Activated CD4-positive, alpha-beta memory T cell treated with anti-CD3 and anti-CD28 coated beads for 36 hours (primary cell): ENCODE measurements at regions of chr14 and their contacts with region 1.

Region 1: GRCh38 chr14:36941783-36942521 is 230.5 kb downstream of the SLC25A21 start:
- DNase-seq: peak; percentile 71
- H3K4me3 Mint-ChIP-seq: no peak overlapping the region
- H3K27ac Mint-ChIP-seq: no peak overlapping the region
- H3K4me1 Mint-ChIP-seq: no peaks in the 10 kb centered on the region
- H3K27me3 Mint-ChIP-seq: peaks cover 2% of the 10 kb centered on the region

Region 2: DNA sequence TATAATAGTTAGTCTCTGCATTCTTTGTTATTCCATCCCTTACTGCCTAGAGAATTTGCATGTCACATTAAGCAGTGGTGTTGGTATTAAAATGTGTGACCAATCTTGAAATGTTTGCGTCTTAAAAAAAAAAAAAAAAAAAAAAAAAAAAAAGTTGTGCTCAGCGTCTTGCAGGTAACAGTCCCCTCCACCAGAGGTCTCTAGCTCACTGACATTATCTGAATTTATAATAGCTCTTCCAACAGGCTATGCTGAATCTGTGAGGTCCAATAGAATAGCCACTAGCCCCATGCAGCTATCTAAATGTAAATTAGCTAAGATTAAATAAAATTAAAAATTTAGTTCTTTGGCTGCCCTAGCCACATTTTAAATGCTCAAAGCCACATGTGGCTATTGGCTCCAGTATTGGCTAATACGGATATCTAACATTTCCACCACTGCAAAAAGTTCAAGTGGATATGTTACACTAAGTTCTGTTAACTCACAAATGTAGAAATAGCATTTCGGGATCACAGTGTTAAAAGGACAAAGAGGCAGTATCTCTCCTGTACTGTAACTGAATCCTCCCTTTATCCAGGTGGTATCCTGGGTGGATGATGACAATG is 388.2 kb before region 1 on chr14:
- CTCF ChIA-PET with region 1: interaction called, 20 read pairs
- POLR2A ChIA-PET with region 1: no interaction called
- intact Hi-C with region 1: loop called (anchors 1 kb)
- DNase-seq: no peak
- H3K4me3 Mint-ChIP-seq: no peak overlapping the region
- H3K27ac Mint-ChIP-seq: no peak overlapping the region
- H3K4me1 Mint-ChIP-seq: no peaks in the 10 kb centered on the region
- H3K27me3 Mint-ChIP-seq: peaks cover 8% of the 10 kb centered on the region

Region 3: DNA sequence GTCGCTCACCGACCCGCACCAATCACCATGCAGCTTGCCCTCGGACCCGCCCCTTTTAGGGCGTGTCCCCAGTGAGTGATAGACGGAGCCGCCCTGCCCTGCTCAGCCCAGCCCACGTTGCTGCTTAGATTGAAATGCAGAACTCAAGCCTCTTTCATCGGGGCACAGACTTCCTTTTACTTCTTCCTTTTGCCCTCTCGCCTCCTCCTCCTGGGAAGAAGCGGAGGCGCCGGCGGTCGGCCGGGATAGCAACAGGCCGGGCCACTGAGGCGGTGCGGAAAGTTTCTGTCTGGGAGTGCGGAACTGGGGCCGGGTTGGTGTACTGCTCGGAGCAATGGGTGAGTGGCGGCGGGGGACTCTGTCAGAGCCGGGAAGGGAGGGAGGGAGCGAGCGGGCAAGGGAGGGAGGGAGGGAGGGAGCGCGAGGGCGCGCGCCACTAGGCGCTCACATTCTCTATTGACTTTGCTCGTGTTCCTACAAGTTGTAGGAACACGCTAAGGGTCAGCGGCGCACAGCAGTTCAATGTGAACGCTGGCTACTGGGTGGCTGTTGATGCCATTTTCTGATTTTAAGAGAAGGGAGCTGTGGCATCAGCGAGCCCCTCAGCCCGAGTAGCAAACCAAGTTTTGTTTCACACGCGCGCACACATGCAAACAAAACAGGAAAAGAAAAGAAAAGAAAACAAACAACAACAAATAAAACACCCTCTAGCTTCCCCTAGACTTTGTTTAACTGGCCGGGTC is 280.0 kb before region 1 on chr14 and contains the start of gene PAX9:
- CTCF ChIA-PET with region 1: no interaction called
- POLR2A ChIA-PET with region 1: no interaction called
- intact Hi-C with region 1: loop called (anchors 2 kb)
- DNase-seq: peak; percentile 73
- H3K4me3 Mint-ChIP-seq: no peak within 1 kb of the TSS
- H3K27ac Mint-ChIP-seq: no peak within 1 kb of the TSS
- H3K4me1 Mint-ChIP-seq: peaks cover 47% of the 10 kb centered on the region
- H3K27me3 Mint-ChIP-seq: peaks cover 76% of the 10 kb centered on the region
- total RNA-seq, gene PAX9: not detected

Region 4: GRCh38 chr14:36910578-36910977 is 31.4 kb before region 1 on chr14:
- CTCF ChIA-PET with region 1: no interaction called
- POLR2A ChIA-PET with region 1: no interaction called
- intact Hi-C with region 1: no loop called
- DNase-seq: no peak
- H3K4me3 Mint-ChIP-seq: no peak overlapping the region
- H3K27ac Mint-ChIP-seq: no peak overlapping the region
- H3K4me1 Mint-ChIP-seq: no peaks in the 10 kb centered on the region
- H3K27me3 Mint-ChIP-seq: no peaks in the 10 kb centered on the region

Region 5: DNA sequence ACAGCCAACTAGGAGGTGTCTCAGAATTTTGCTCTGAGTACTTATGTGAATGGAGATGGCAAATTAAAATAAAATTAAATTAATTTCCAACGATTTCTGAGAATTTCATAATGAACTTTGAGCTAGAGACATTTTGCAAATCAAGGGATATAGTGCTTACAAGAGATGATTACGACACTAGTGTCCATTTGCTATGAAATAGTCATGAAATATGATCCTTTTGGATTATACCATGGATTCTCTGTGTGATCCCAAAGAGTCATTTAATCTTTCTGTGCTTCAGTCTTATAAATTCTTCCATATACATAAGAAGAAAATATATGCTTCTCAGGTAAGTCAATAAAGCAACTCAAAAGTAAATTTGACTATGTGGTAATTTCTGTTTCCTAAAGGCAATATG is 10.2 kb before region 1 on chr14:
- CTCF ChIA-PET with region 1: interaction called, 17 read pairs
- POLR2A ChIA-PET with region 1: no interaction called
- intact Hi-C with region 1: no loop called
- DNase-seq: no peak
- H3K4me3 Mint-ChIP-seq: no peak overlapping the region
- H3K27ac Mint-ChIP-seq: no peak overlapping the region
- H3K4me1 Mint-ChIP-seq: no peaks in the 10 kb centered on the region
- H3K27me3 Mint-ChIP-seq: no peaks in the 10 kb centered on the region